ENCODE measurements at regions of chr10 and their contacts with region 1.

Region 1: GRCh38 chr10:61903221-61903927 is 1.9 kb downstream of the ARID5B start:
- DNase-seq: peak; percentile 76
- ATAC-seq: peak; percentile 46
- H3K4me3 Mint-ChIP-seq: peak overlapping the region; percentile 97
- H3K27ac Mint-ChIP-seq: peak overlapping the region; percentile 98
- H3K4me1 Mint-ChIP-seq: peaks cover 51% of the 10 kb centered on the region
- H3K27me3 Mint-ChIP-seq: no peaks in the 10 kb centered on the region
- CTCF ChIP-seq: no peak

Region 2: DNA sequence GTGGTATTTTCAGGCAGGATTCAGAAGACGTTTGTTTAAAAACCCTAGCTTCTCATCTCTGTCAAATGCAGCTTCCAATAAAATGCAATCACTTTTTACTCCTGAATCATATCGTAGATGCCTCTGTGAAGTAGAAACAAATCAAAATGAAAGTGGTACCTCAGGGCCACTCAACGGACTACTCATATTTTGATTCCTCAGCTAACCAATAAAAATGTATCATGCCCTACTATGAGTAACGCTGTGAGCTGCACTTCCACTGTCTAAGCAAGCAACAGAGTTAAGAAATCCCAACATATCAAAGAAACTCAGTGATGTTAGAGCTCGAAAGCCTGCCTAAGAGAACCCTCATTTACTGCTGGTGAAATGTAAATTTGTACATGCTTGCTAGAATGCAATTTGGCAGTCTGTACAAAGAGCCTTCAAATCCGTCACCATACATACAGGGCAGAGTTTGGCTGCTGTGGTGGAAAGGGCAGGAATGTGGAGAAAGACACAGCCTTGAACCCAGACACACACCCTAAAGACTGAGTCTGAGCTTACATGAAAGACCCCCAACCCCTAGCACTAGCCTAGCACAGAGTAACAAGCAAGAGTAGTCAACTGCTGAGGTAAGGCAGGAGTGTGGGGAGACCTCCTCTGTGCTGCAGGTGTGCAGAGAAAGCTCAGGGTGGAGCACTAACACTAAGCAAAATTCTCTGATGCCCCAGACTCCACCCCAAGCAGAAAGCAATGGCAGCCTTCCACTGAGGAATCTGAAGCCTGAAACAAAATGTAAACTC is 1665.2 kb before region 1 on chr10:
- CTCF ChIA-PET with region 1: no interaction called
- POLR2A ChIA-PET with region 1: no interaction called
- intact Hi-C with region 1: loop called (anchors 10 kb)
- DNase-seq: peak; percentile 23
- ATAC-seq: peak; percentile 51
- H3K4me3 Mint-ChIP-seq: peak overlapping the region; percentile 67
- H3K27ac Mint-ChIP-seq: peak overlapping the region; percentile 93
- H3K4me1 Mint-ChIP-seq: peaks cover 61% of the 10 kb centered on the region
- H3K27me3 Mint-ChIP-seq: no peaks in the 10 kb centered on the region
- CTCF ChIP-seq: no peak

Region 3: GRCh38 chr10:61869774-61870525 is 33.4 kb before region 1 on chr10:
- CTCF ChIA-PET with region 1: no interaction called
- POLR2A ChIA-PET with region 1: interaction called, 18 read pairs
- intact Hi-C with region 1: no loop called
- DNase-seq: no peak
- ATAC-seq: no peak
- H3K4me3 Mint-ChIP-seq: no peak overlapping the region
- H3K27ac Mint-ChIP-seq: no peak overlapping the region
- H3K4me1 Mint-ChIP-seq: peaks cover 2% of the 10 kb centered on the region
- H3K27me3 Mint-ChIP-seq: no peaks in the 10 kb centered on the region
- CTCF ChIP-seq: no peak

Region 4: GRCh38 chr10:61961278-61961677 is 57.9 kb after region 1 on chr10:
- CTCF ChIA-PET with region 1: interaction called, 3 read pairs
- POLR2A ChIA-PET with region 1: interaction called, 63 read pairs
- intact Hi-C with region 1: no loop called
- DNase-seq: no peak
- ATAC-seq: peak; percentile 52
- H3K4me3 Mint-ChIP-seq: peak overlapping the region; percentile 35
- H3K27ac Mint-ChIP-seq: peak overlapping the region; percentile 88
- H3K4me1 Mint-ChIP-seq: peaks cover 87% of the 10 kb centered on the region
- H3K27me3 Mint-ChIP-seq: no peaks in the 10 kb centered on the region
- CTCF ChIP-seq: no peak

Region 5: GRCh38 chr10:62000037-62000603 is 96.7 kb after region 1 on chr10:
- CTCF ChIA-PET with region 1: interaction called, 5 read pairs
- POLR2A ChIA-PET with region 1: interaction called, 320 read pairs
- intact Hi-C with region 1: loop called (anchors 1 kb)
- DNase-seq: peak; percentile 60
- ATAC-seq: peak; percentile 86
- H3K4me3 Mint-ChIP-seq: peak overlapping the region; percentile 77
- H3K27ac Mint-ChIP-seq: peak overlapping the region; percentile 100
- H3K4me1 Mint-ChIP-seq: peaks cover 95% of the 10 kb centered on the region
- H3K27me3 Mint-ChIP-seq: no peaks in the 10 kb centered on the region
- CTCF ChIP-seq: no peak

Region 6: DNA sequence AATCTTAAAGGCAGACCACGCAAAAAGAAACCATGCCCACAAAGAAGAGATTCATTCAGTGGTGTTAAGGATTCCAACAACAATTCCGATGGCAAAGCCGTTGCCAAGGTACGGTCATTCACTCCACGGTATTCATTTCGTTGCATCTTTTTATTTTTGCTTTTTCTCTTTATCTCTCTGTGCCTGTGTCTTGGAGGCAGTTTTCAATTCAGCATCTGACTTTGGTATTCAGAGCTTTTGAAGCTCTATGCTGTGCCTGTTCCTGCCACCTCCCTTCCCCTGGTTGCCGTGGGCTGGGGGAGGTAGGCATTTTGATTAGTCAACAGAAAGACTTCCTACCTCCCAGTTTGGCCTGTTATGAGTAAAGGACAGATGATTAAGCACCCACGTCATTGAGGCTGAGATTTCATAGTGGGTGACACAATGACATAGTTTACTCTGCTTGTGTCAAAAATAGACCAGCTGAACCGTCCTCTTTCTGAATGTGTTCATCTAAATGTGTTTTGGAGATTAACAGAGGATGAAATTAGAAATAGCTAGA is 147.6 kb after region 1 on chr10:
- CTCF ChIA-PET with region 1: interaction called, 13 read pairs
- POLR2A ChIA-PET with region 1: interaction called, 589 read pairs
- intact Hi-C with region 1: loop called (anchors 1 kb)
- DNase-seq: no peak
- ATAC-seq: peak; percentile 60
- H3K4me3 Mint-ChIP-seq: peak overlapping the region; percentile 85
- H3K27ac Mint-ChIP-seq: peak overlapping the region; percentile 93
- H3K4me1 Mint-ChIP-seq: peaks cover 100% of the 10 kb centered on the region
- H3K27me3 Mint-ChIP-seq: no peaks in the 10 kb centered on the region
- CTCF ChIP-seq: no peak

Region 7: GRCh38 chr10:62492012-62492869 is 588.9 kb after region 1 on chr10:
- CTCF ChIA-PET with region 1: no interaction called
- POLR2A ChIA-PET with region 1: no interaction called
- intact Hi-C with region 1: no loop called
- DNase-seq: no peak
- ATAC-seq: peak; percentile 49
- H3K4me3 Mint-ChIP-seq: no peak overlapping the region
- H3K27ac Mint-ChIP-seq: no peak overlapping the region
- H3K4me1 Mint-ChIP-seq: peaks cover 27% of the 10 kb centered on the region
- H3K27me3 Mint-ChIP-seq: peaks cover 4% of the 10 kb centered on the region
- CTCF ChIP-seq: no peak

Region 8: DNA sequence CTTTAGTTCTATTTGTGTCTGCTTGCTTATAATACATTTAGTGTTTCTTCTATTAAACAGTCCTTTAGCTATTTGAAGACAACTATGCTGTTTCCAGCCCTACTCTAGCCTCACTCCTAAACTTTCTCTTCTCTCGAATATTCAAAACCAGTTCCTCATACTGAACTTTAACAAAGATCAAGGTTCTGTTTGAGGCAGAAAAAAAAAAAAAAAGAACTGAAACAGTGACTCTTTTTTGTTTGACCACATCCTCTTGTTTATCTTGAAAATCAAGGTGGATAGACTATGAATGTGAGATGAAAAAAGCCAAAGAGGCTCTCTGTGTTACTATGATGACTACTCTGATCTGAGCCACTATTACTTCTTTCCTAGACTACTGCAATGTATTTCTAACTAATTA is 625.1 kb after region 1 on chr10:
- CTCF ChIA-PET with region 1: no interaction called
- POLR2A ChIA-PET with region 1: interaction called, 9 read pairs
- intact Hi-C with region 1: loop called (anchors 5 kb)
- DNase-seq: no peak
- ATAC-seq: peak; percentile 59
- H3K4me3 Mint-ChIP-seq: peak overlapping the region; percentile 64
- H3K27ac Mint-ChIP-seq: peak overlapping the region; percentile 92
- H3K4me1 Mint-ChIP-seq: peaks cover 58% of the 10 kb centered on the region
- H3K27me3 Mint-ChIP-seq: no peaks in the 10 kb centered on the region
- CTCF ChIP-seq: no peak